Ascending aorta (tissue), 2 donors: ENCODE measurements at regions of chr10 and their contacts with region 1.

Region 1: GRCh38 chr10:91632671-91633550 is at the start of gene PPP1R3C:
- DNase-seq: peak; percentile 86 to 95
- H3K4me3 ChIP-seq: peak within 1 kb of the TSS; percentile 76 to 84
- H3K27ac ChIP-seq: peak within 1 kb of the TSS; percentile 76 to 82
- H3K4me1 ChIP-seq: peaks cover 0 to 7% of the 10 kb centered on the region in 2 donors
- H3K27me3 ChIP-seq: no peaks in the 10 kb centered on the region
- CTCF ChIP-seq: peak; percentile 17 to 33 (median 31)
- total RNA-seq, gene PPP1R3C: 2.0 TPM

Region 2: GRCh38 chr10:91198781-91199180 is 434.1 kb before region 1 on chr10:
- intact Hi-C with region 1: no loop called
- DNase-seq: no peak
- H3K4me3 ChIP-seq: no peak overlapping the region
- H3K27ac ChIP-seq: peak overlapping the region; percentile 43 to 58
- H3K4me1 ChIP-seq: peaks cover 0 to 16% of the 10 kb centered on the region in 2 donors
- H3K27me3 ChIP-seq: no peaks in the 10 kb centered on the region
- CTCF ChIP-seq: no peak

Region 3: DNA sequence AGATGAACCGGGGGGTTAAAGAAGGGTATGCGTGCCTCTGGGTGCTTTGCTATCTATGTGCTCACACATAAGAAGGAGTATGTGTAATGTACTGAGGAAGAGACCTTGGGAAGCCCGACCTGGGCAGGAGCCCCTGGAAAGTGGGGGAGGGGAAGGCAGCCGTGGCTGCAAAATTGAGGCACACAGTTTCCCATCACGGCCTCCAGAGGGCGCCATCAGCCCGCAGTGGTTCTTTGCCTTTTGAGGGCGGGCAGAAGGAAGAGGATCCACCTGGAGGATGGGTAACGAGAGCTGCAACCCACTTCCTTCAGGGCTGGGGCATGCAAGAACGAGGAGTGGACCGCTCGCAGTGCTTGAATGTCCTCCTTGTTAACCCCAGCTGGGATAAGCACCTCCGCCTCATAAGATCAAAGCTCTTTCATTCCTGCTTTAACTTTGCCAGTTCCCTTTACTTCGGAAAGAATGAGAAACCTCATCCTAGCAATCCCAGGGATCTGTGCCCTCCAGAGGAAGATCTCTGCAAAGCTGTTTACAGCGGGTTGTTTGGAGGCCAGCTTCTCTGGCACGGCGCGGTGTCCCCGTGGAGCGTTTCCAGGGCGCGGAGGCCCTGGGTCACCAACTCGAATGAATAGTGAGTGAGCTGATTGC is 334.6 kb before region 1 on chr10:
- intact Hi-C with region 1: loop called (anchors 2 kb)
- DNase-seq: peak in 1 of 2 donors; percentile 82
- H3K4me3 ChIP-seq: peak overlapping the region; percentile 62 to 68
- H3K27ac ChIP-seq: no peak overlapping the region
- H3K4me1 ChIP-seq: peaks cover 5 to 11% of the 10 kb centered on the region in 2 donors
- H3K27me3 ChIP-seq: no peaks in the 10 kb centered on the region
- CTCF ChIP-seq: peak; percentile 93 to 97 (median 95)

Region 4: GRCh38 chr10:91340613-91341362 is 292.1 kb before region 1 on chr10:
- intact Hi-C with region 1: no loop called
- DNase-seq: peak in 1 of 2 donors; percentile 74
- H3K4me3 ChIP-seq: no peak overlapping the region
- H3K27ac ChIP-seq: peak overlapping the region in 1 of 2 donors; percentile 46
- H3K4me1 ChIP-seq: no peaks in the 10 kb centered on the region
- H3K27me3 ChIP-seq: no peaks in the 10 kb centered on the region
- CTCF ChIP-seq: no peak

Region 5: GRCh38 chr10:91493313-91493712 is 139.6 kb before region 1 on chr10:
- intact Hi-C with region 1: loop called (anchors 1 kb)
- DNase-seq: no peak
- H3K4me3 ChIP-seq: no peak overlapping the region
- H3K27ac ChIP-seq: no peak overlapping the region
- H3K4me1 ChIP-seq: no peaks in the 10 kb centered on the region
- H3K27me3 ChIP-seq: no peaks in the 10 kb centered on the region
- CTCF ChIP-seq: peak; percentile 42 to 62 (median 55)

Region 6: DNA sequence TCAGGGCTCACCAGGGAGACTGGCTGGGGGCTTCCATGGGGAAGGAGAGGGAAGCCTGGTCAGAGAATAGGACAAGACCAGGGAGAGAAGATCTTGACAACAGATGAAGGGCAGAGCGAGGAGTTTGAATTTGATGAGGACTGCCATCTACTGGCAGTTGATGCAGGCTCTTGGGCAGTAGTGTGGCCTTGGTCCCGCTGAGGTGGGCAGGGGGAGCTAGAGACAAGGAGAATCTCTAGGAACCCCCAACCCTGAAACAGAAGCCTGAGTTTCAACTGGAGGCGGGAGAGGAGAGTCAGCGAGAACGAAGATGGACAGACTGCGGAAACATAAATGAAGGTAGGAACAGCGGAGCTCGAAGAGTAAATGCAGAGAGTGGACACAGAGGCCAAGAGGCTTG is 81.1 kb before region 1 on chr10:
- intact Hi-C with region 1: loop called (anchors 2 kb)
- DNase-seq: no peak
- H3K4me3 ChIP-seq: no peak overlapping the region
- H3K27ac ChIP-seq: no peak overlapping the region
- H3K4me1 ChIP-seq: peaks cover 0 to 3% of the 10 kb centered on the region in 2 donors
- H3K27me3 ChIP-seq: no peaks in the 10 kb centered on the region
- CTCF ChIP-seq: peak; percentile 18 to 45 (median 22)

Region 7: DNA sequence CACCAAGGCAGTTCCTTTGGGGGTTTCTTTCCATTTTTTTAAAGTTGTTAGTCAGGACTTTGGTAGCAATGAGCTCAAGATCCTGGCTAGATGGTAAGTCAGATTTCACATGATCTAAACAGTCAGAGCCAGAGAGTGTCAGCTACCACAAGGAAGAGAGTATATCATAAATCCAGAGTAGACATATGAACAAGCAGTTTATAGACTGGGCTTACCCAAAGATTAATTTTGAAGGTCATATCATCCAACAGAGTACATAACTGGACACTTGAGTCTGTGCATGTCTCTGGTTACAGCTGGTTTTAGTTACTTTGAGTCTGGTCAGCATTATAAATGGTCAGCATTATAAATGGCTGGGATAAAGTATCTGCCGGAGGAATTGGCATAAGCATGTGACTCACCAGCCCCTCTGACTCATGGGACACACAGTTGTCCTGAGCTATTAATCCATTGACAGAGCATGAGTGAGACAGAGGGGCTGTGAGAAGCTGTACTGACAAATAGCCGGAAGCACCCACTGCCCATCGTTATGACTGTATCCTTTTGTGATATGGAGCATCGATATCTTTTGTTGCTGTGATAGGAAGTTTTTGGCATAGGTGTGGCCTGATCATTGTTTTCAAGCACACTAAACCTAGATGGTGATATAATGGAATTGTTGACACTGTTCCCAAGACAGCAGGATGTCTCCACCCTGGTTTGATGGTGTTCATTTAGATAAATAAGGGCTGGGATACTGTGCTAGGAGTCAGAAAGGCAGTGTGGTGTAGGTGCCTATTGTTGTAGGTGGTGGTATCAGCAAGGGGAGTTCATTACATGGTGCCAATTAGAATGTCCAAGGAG is 19.3 kb before region 1 on chr10:
- intact Hi-C with region 1: loop called (anchors 2 kb)
- DNase-seq: peak in 1 of 2 donors; percentile 82
- H3K4me3 ChIP-seq: no peak overlapping the region
- H3K27ac ChIP-seq: peak overlapping the region; percentile 79 to 80
- H3K4me1 ChIP-seq: peaks cover 4 to 23% of the 10 kb centered on the region in 2 donors
- H3K27me3 ChIP-seq: no peaks in the 10 kb centered on the region
- CTCF ChIP-seq: no peak

Region 8: GRCh38 chr10:91797874-91798648 is 165.2 kb after region 1 on chr10 and contains the start of gene TNKS2:
- intact Hi-C with region 1: loop called (anchors 2 kb)
- DNase-seq: peak; percentile 74 to 97
- H3K4me3 ChIP-seq: peak within 1 kb of the TSS; percentile 96 to 98
- H3K27ac ChIP-seq: peak within 1 kb of the TSS; percentile 93 to 97
- H3K4me1 ChIP-seq: peaks cover 7 to 28% of the 10 kb centered on the region in 2 donors
- H3K27me3 ChIP-seq: no peaks in the 10 kb centered on the region
- CTCF ChIP-seq: no peak
- total RNA-seq, gene TNKS2: 26.4 TPM